ENCODE measurements at regions of chr5 and their contacts with region 1.

Region 1: GRCh38 chr5:59673438-59674058 is 220.0 kb downstream of the PDE4D start:
- DNase-seq: no peak
- H3K4me3 ChIP-seq: no peak overlapping the region
- H3K27ac ChIP-seq: no peak overlapping the region
- H3K4me1 ChIP-seq: no peaks in the 10 kb centered on the region
- H3K27me3 ChIP-seq: no peaks in the 10 kb centered on the region
- CTCF ChIP-seq: peak; percentile 24 to 79 (median 70)
- POLR2A ChIP-seq: no peak

Region 2: DNA sequence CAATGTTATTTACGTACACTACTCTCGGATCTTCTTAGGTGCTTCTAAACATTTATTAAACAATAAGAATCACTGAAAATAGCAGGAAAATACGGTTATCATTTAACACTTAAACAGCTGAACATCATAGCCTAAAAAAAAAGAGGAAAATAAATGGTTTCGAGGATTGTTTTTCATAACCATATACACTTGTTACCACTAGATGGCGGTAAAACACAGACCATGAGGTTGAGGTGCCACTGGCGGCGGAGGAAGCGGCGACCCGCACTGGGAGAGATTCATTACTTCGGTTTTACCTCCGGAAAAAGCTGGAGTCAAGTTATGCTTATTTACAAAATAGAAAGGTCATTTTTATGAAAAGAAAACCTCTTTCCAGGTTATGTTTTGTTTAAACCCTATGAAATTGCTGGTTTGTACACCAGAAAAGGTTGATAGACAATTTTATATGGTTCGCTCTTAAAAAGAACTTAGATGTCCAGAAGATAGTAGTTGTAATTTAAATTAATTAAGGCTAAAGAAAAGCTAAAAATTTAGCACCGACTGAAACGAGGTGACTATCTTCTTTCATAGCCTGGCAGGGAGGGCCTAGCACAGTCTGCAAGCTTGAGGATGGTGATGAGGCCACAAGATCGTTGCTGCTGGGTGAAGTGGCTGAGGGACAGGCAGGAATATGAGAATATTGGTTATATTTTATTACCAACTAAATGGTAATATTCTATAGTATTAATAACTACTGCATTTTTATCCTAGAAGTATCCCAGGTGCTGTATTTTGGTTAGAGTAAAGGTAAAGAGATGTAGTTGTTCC is 484.9 kb before region 1 on chr5:
- intact Hi-C with region 1: loop called (anchors 10 kb)
- DNase-seq: peak; percentile 89
- H3K4me3 ChIP-seq: peak overlapping the region in 2 of 8 donors; percentile 6 to 17
- H3K27ac ChIP-seq: no peak overlapping the region
- H3K4me1 ChIP-seq: peaks cover 0 to 10% (median 8%) of the 10 kb centered on the region in 6 donors
- H3K27me3 ChIP-seq: no peaks in the 10 kb centered on the region
- CTCF ChIP-seq: peak; percentile 57 to 79 (median 75)
- POLR2A ChIP-seq: no peak

Region 3: GRCh38 chr5:59390074-59390659 is 283.4 kb before region 1 on chr5:
- intact Hi-C with region 1: loop called (anchors 5 kb)
- DNase-seq: no peak
- H3K4me3 ChIP-seq: no peak overlapping the region
- H3K27ac ChIP-seq: no peak overlapping the region
- H3K4me1 ChIP-seq: no peaks in the 10 kb centered on the region
- H3K27me3 ChIP-seq: no peaks in the 10 kb centered on the region
- CTCF ChIP-seq: peak in 10 of 11 experiments; percentile 13 to 70 (median 51)
- POLR2A ChIP-seq: no peak

Region 4: GRCh38 chr5:59506285-59506877 is 167.2 kb before region 1 on chr5:
- intact Hi-C with region 1: loop called (anchors 5 kb)
- DNase-seq: no peak
- H3K4me3 ChIP-seq: no peak overlapping the region
- H3K27ac ChIP-seq: no peak overlapping the region
- H3K4me1 ChIP-seq: no peaks in the 10 kb centered on the region
- H3K27me3 ChIP-seq: no peaks in the 10 kb centered on the region
- CTCF ChIP-seq: peak in 5 of 11 experiments; percentile 16 to 45 (median 28)
- POLR2A ChIP-seq: no peak